ENCODE measurements at regions of chr1 and their contacts with region 1.

Region 1: DNA sequence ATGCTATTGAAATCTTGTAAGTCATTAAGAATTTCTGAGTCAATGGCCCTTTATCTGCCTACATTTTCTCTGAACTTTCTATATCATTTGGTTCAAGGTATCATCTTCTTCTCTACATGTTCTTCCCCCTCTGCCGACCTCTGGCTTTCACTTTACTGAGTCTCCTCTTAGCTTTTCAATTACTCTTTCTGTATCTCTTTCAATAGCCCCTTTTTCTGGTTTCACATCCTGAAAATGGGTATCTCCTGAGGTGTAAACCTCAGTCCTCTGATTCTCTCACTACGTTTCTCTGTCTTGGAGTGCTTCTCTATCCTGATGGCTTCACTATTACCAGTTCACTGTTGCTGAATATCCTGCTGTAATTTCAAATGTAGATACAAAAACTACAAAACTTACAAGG is 98.9 kb downstream of the LYST start:
- DNase-seq: peak; percentile 15
- ATAC-seq: peak; percentile 49
- H3K4me3 Mint-ChIP-seq: no peak overlapping the region
- H3K27ac Mint-ChIP-seq: peak overlapping the region; percentile 18
- H3K4me1 Mint-ChIP-seq: peaks cover 12% of the 10 kb centered on the region
- H3K27me3 Mint-ChIP-seq: no peaks in the 10 kb centered on the region
- CTCF ChIP-seq: no peak

Region 2: DNA sequence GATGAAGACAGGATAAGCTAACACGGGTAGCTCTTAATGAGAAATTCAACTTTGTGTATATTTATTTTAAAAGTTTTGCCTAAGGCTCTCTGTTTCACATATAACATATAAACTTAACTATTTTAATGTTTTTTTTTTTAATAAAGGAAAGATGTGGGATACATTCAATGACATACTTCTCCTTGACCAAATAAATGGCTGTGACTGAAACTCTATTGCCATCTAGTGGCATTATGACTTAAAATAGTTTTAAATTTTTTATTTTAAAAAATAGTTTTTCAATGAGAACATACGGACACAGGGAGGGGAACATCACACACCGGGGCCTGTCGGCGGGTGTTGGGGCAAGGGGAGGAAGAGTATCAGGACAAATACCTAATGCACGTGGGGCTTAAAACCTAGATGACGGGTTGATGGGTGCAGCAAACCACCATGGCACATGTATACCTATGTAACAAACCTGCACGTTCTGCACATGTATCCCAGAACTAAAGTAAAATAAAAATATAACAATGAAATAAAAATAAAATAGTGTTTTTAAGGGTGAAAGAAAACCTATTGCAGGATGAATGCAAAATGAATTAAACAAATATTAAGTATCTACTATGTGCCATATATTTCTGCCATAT is 15.5 kb after region 1 on chr1:
- CTCF ChIA-PET with region 1: interaction called, 11 read pairs
- POLR2A ChIA-PET with region 1: no interaction called
- intact Hi-C with region 1: no loop called
- DNase-seq: no peak
- ATAC-seq: no peak
- H3K4me3 Mint-ChIP-seq: no peak overlapping the region
- H3K27ac Mint-ChIP-seq: no peak overlapping the region
- H3K4me1 Mint-ChIP-seq: no peaks in the 10 kb centered on the region
- H3K27me3 Mint-ChIP-seq: no peaks in the 10 kb centered on the region
- CTCF ChIP-seq: peak; percentile 78

Measured in activated CD8-positive, alpha-beta T cell treated with anti-CD3 and anti-CD28 coated beads for 36 hours (primary cell).